HepG2 (cell line): ENCODE measurements at regions of chr1 and their contacts with region 1.

Region 1: DNA sequence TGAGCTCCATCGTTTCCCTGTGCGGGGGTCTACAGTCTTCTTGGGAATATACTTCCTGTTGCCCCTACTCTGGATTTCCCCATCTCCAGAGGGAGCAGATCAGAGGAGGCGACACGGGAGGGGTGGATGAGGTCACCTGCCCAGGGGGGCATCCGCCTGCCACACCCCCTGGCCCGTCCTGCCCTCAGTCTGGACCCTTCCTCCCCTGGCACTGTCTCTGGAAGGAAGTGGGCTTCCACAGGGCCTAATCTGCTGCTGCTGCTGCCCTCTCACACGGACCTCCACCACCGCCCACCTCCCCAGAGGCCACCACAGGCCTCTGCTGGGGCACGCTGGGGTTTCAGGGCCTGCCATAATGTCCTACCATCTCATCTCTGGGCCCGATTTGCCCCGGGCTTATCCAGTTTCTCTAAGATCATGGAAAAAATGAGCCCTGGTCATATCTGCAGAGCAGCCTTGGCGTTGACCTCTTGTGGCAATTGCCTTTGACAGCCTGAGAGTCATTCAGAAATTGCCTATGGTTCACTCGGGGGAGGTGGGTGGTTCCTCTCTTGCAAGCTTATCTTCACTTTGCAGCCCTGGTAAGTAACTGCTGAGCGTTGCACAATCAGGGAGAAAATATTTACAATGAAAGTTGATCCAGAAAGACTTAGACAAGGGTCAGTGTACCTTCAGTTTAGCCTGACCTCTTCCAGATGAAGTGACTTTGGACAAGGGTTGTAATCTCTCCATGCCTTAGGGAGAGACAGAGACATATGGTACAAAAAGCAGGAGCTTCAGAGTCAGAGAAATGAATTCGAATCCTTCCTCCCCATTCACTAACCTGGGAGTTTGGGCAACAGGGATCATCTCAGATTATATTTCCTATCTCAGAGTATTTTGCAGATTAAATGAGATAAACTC is 252.4 kb downstream of the TOMM20 start:
- DNase-seq: peak; percentile 98
- ATAC-seq: peak; percentile 74
- H3K4me3 ChIP-seq: peak overlapping the region; percentile 36 to 71 (median 49); a peak in 5 of 6 replicates
- H3K27ac ChIP-seq: peak overlapping the region; percentile 98
- H3K4me1 ChIP-seq: peaks cover 93% of the 10 kb centered on the region
- H3K27me3 ChIP-seq: no peaks in the 10 kb centered on the region; a peak in 1 of 5 replicates
- CTCF ChIP-seq: no peak; the same call in 1 of the 2 replicates
- EP300 ChIP-seq: peak; percentile 74 to 97; a peak in 3 of 4 replicates
- POLR2A ChIP-seq: peak; percentile 43 to 62; a peak in 2 of 4 replicates
- RAD21 ChIP-seq: peak; percentile 20; the same call in 1 of the 2 replicates

Region 2: DNA sequence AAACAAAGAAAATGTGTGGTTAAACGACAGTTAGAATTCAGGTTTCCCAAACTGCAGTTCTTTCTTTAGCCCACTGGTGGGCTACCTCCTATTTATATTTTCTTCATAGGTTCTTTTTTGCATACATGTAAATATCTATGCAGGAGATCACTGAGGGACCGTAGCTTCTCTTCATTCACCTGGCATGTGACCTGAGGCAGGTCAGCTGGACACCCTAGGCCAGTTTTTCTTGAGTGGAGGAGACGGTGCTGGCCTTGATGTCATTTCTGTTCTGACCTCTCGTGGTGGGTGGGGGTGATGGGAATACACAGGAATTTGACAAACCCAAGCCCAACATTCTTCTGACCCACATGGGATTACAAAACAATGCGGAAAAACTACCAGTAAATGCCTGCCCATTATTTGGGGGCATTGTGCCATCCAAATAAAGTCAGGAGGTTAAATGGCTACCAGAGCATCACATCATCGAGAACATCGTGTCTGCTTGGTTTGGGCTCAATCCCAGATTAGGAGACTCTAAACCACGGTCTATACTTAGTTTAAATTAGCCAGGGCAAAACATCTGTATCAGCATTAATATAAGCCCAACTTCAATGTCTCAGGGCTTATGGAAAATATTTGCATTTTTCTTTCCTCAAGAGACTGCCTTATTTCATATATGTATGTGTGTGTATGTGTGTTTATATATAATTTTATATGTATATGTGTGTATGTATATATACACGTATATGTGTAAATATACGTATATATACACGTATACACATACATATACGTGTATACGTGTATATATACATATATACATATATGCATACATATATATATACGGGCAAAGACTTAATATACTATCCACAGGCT is 258.8 kb before region 1 on chr1:
- CTCF ChIA-PET with region 1: no interaction called
- POLR2A ChIA-PET with region 1: interaction called, 120 read pairs
- in situ Hi-C with region 1: loop called (anchors 5 kb)
- intact Hi-C with region 1: loop called (anchors 1 kb)
- DNase-seq: no peak
- ATAC-seq: no peak
- H3K4me3 ChIP-seq: no peak overlapping the region
- H3K27ac ChIP-seq: peak overlapping the region; percentile 99
- H3K4me1 ChIP-seq: peaks cover 97% of the 10 kb centered on the region
- H3K27me3 ChIP-seq: no peaks in the 10 kb centered on the region
- CTCF ChIP-seq: no peak
- EP300 ChIP-seq: no peak
- POLR2A ChIP-seq: no peak
- RAD21 ChIP-seq: no peak

Region 3: DNA sequence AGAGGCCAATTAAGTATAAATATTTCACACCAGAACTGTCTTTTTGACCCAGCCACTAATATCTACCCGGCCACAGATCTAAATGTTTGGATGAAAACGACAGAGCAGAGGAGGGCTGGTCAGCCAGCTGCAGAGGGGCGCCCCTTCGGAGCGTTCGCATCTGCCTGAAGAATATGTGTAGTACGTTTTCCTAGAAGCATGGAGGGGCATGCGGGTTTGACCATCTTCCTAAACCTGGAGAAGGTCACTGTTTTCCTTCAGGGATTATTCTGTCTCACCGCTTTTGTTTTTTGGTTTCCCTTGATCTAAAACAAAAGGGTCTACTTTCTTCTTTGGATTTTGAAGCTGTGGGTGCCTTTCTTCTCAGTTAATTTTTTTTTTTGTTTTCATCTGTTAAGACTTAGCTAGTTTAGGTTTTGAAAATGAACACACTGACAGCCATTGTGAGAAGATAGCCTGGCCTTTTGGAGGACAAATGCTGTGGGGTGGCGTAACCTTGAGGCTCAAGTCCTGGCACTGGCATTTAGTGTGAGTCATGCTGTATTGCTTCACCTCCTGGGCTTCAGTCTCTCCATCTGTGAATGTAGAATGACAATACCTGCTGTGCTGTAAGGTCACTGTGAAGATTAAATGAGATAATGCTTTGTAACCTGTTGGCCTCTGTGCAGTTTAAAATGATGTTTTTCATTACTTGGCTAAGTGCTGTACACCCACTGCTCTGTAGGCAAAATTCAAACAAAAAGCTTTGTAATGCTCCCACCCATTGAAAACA is 192.2 kb before region 1 on chr1:
- CTCF ChIA-PET with region 1: no interaction called
- POLR2A ChIA-PET with region 1: no interaction called
- in situ Hi-C with region 1: no loop called
- intact Hi-C with region 1: no loop called
- DNase-seq: peak; percentile 97
- ATAC-seq: peak; percentile 100
- H3K4me3 ChIP-seq: no peak overlapping the region
- H3K27ac ChIP-seq: peak overlapping the region; percentile 87
- H3K4me1 ChIP-seq: peaks cover 21% of the 10 kb centered on the region
- H3K27me3 ChIP-seq: no peaks in the 10 kb centered on the region
- CTCF ChIP-seq: 0 out of 2 replicates have a peak, but pooled peaks have one; percentile 22
- EP300 ChIP-seq: peak; percentile 79 to 93; a peak in 3 of 4 replicates
- POLR2A ChIP-seq: no peak
- RAD21 ChIP-seq: no peak; the same call in 1 of the 2 replicates

Region 4: DNA sequence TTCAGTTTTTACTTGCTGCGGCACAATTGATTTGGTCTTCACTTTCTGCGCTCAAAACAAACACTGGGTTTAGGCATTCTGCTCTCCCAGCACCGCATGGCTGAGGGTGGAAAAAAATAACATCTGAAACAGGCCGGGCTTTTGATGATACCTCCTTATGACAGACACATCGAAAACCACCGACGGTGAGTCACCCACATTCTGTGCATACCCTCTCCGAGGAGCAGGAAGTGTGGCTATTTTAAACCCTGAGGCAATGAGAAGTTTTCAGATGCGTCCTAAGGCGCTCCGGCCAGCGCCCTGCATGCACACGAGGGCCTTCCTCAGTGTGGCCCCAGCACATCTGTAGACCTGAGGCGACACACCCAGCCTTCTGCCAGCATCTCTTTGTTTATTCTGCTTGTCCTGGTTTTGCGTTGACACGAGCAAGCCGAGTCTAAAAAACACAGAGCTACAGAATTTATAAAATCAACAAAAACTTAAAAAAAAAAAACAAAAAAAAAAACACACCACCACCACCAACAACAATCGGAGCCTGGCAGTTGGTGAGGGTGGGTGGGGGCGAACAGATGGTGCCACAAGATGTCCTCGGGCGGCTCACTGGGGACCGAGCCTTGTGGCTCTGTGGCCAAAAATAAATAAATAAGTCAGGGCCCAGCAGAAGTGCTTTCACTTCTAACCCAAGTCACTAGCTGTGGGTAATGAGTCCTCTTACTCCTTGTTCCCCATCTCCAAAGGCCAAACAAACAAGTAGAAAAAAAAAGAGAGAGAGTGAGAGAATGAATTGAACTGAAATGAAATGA is 103.7 kb before region 1 on chr1:
- CTCF ChIA-PET with region 1: no interaction called
- POLR2A ChIA-PET with region 1: interaction called, 17 read pairs
- in situ Hi-C with region 1: no loop called
- intact Hi-C with region 1: loop called (anchors 5 kb)
- DNase-seq: peak; percentile 93
- ATAC-seq: peak; percentile 66
- H3K4me3 ChIP-seq: no peak overlapping the region
- H3K27ac ChIP-seq: peak overlapping the region; percentile 73
- H3K4me1 ChIP-seq: peaks cover 61% of the 10 kb centered on the region
- H3K27me3 ChIP-seq: peaks cover 0 to 7% of the 10 kb centered on the region in 2 experiments; a peak in 2 of 5 replicates
- CTCF ChIP-seq: no peak
- EP300 ChIP-seq: peak; percentile 25 to 87; a peak in 2 of 4 replicates
- POLR2A ChIP-seq: 0 out of 4 replicates have a peak, but pooled peaks of 1 of the 2 experiments have one; percentile 28
- RAD21 ChIP-seq: 0 out of 2 replicates have a peak, but pooled peaks have one; percentile 21

Region 5: DNA sequence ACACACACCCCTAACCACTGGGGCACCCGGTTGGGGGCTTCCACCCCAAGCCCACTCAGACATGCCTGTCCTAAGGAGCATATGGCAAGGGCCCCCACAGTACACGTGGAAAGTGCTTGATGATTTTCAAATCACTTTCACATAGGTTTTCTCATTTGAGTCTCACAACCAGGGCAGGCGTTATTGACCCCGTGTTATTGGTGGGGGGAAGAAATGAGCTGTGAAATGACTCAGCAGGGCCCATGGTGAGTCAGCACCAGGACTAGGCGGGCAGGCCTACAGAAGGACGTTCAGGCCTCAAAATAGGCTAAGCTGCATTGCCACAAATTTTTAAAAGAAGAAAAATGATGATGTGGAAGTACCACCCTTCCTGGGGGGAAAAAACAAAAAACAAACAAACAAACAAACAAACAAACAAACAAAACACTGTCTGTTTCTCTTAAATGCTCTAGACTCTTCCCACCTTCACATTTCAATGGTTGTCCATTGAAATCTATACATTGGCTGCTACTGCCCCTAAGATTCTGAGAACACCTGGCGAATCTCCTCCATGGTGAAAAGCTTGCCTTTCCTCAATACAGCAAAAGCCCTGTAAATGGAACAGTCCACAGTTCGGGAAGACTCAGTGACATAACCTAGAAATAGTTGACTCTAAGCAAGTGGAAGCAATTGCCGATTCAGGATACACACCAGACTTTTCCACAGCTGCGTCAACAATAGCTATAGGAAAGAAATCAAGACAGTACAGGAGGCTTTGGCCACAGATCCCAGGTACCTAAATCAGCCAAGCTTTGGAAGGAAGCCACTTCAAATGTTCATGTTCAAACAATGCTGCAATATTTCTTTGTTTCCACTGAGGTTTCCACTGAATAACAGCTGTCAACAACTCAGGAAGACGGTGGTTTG is 17.8 kb after region 1 on chr1:
- CTCF ChIA-PET with region 1: no interaction called
- POLR2A ChIA-PET with region 1: interaction called, 27 read pairs
- in situ Hi-C with region 1: no loop called
- intact Hi-C with region 1: no loop called
- DNase-seq: peak; percentile 20
- ATAC-seq: no peak
- H3K4me3 ChIP-seq: no peak overlapping the region
- H3K27ac ChIP-seq: no peak overlapping the region
- H3K4me1 ChIP-seq: peaks cover 52% of the 10 kb centered on the region
- H3K27me3 ChIP-seq: no peaks in the 10 kb centered on the region
- CTCF ChIP-seq: no peak
- EP300 ChIP-seq: no peak; a peak in 1 of 4 replicates
- POLR2A ChIP-seq: no peak
- RAD21 ChIP-seq: no peak

Region 6: DNA sequence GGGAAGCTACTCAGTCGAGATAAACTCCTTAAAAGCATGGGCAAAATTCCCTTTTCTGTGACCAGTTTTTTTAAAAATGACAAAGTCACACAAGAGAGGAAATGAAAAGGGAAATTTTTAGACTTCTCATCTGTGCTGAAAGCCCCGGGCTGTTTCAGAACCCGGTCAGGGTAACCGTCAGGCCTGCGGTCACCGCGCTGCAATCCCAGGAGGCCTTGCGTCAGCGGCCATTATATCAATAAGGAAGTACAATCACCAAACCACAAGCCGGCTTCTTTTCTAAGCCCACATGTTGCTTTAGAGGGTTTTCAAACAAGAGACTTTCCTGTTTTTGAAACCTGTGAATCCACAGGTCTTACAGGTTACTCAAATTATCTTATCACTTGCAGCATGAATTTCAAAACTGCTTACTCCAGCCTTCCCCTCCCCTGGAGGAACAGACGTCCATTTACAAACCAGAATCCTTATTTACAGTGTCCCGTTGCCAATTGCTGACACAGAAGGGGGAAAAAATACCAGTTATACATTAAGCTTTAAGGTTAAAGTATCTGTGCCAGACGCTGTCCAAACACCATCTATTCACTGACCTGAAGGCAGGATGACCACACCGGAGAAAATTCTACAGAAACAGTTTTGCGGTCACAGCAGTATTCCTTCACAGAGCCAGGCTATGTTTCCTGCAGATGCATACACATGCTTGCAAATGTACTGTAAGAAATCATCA is 87.1 kb after region 1 on chr1:
- CTCF ChIA-PET with region 1: no interaction called
- POLR2A ChIA-PET with region 1: interaction called, 178 read pairs
- in situ Hi-C with region 1: loop called (anchors 5 kb)
- intact Hi-C with region 1: loop called (anchors 1 kb)
- DNase-seq: peak; percentile 99
- ATAC-seq: peak; percentile 70
- H3K4me3 ChIP-seq: peak overlapping the region in 2 of 3 experiments; percentile 33 to 55; a peak in 2 of 6 replicates
- H3K27ac ChIP-seq: peak overlapping the region; percentile 100
- H3K4me1 ChIP-seq: peaks cover 78% of the 10 kb centered on the region
- H3K27me3 ChIP-seq: no peaks in the 10 kb centered on the region
- CTCF ChIP-seq: no peak
- EP300 ChIP-seq: peak in 1 of 2 experiments; percentile 98; a peak in 2 of 4 replicates
- POLR2A ChIP-seq: peak; percentile 70 to 80
- RAD21 ChIP-seq: peak; percentile 26; the same call in 1 of the 2 replicates

Region 7: DNA sequence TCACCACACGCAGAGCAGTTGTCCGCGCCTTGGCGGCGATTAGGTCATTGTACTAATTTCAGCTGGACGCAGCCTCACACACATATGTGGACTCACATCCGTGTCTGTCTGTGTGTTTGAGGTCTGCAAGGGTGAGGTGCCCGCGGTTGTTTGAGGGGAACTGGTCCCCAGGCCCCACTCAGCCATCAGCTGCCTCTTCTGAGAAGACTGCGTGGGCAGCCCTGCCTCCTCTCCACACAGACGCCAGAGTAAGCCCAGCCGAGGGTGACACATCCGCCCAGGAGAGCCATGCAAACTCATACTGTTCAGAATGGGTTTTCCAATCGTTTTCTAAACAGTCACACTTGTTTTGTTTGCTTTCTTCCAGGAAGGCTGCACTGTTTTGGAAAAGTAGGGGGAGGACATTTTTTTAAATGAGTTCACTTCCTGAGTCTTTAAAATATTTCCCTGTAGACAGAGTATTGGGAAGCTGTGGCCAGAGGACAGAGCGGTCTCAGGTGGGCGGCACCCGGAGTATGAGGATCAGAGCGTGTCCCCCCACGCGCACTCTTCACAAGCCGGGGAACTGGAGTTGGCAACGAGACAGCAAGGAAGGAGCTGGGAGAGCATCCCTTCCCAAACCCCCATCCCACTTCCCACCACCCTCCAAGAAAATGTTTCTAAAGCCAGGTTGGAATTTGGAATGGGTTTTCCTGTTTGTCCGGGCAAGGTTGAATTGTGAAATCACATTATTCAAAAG is 199.2 kb after region 1 on chr1:
- CTCF ChIA-PET with region 1: no interaction called
- POLR2A ChIA-PET with region 1: interaction called, 51 read pairs
- in situ Hi-C with region 1: no loop called
- intact Hi-C with region 1: no loop called
- DNase-seq: peak; percentile 89
- ATAC-seq: peak; percentile 57
- H3K4me3 ChIP-seq: peak overlapping the region; percentile 56 to 82 (median 58)
- H3K27ac ChIP-seq: peak overlapping the region; percentile 99
- H3K4me1 ChIP-seq: peaks cover 91% of the 10 kb centered on the region
- H3K27me3 ChIP-seq: no peaks in the 10 kb centered on the region; a peak in 1 of 5 replicates
- CTCF ChIP-seq: no peak
- EP300 ChIP-seq: peak in 1 of 2 experiments; percentile 59; a peak in 2 of 4 replicates
- POLR2A ChIP-seq: peak in 1 of 2 experiments; percentile 80; a peak in 2 of 4 replicates
- RAD21 ChIP-seq: no peak